ENCODE measurements at regions of chr14 and their contacts with region 1.

Region 1: DNA sequence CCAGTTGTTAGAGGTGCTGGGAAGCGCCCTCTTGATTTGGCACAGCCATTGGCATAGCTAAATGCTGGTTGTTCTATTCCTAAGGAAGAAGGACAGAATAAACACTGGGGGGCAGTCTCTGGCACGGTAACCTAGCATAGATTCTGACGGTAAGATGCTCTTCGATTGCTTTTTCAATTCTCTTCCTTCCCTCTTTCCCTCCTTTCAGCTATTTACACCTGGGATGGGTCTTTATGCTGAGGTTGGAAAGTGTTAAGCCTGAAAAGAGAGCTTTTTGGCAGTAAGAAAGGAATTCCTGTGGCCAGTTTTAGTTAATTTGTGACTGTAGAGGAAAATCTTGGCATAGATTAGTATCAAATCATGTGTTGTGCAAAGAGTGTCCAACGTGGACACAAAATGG is 162.8 kb downstream of the SNAPC1 start:
- DNase-seq: peak; percentile 74
- ATAC-seq: no peak; the same call in 1 of the 2 replicates
- H3K4me3 ChIP-seq: no peak overlapping the region
- H3K27ac ChIP-seq: peak overlapping the region; percentile 96
- H3K4me1 ChIP-seq: peaks cover 58% of the 10 kb centered on the region
- H3K27me3 ChIP-seq: no peaks in the 10 kb centered on the region
- CTCF ChIP-seq: peak; percentile 78

Region 2: GRCh38 chr14:61884711-61885110 is 40.3 kb before region 1 on chr14:
- CTCF ChIA-PET with region 1: interaction called, 8 read pairs
- POLR2A ChIA-PET with region 1: no interaction called
- intact Hi-C with region 1: loop called (anchors 1 kb)
- DNase-seq: peak; percentile 80
- ATAC-seq: peak; percentile 16; the same call in 1 of the 2 replicates
- H3K4me3 ChIP-seq: peak overlapping the region; percentile 45; the same call in 1 of the 2 replicates
- H3K27ac ChIP-seq: peak overlapping the region; percentile 91
- H3K4me1 ChIP-seq: peaks cover 24% of the 10 kb centered on the region
- H3K27me3 ChIP-seq: no peaks in the 10 kb centered on the region
- CTCF ChIP-seq: no peak

Region 3: GRCh38 chr14:61992139-61992538 is 67.1 kb after region 1 on chr14:
- CTCF ChIA-PET with region 1: no interaction called
- POLR2A ChIA-PET with region 1: interaction called, 6 read pairs
- intact Hi-C with region 1: loop called (anchors 1 kb)
- DNase-seq: peak; percentile 97
- ATAC-seq: peak; percentile 97
- H3K4me3 ChIP-seq: peak overlapping the region; percentile 59
- H3K27ac ChIP-seq: peak overlapping the region; percentile 98
- H3K4me1 ChIP-seq: peaks cover 35% of the 10 kb centered on the region
- H3K27me3 ChIP-seq: no peaks in the 10 kb centered on the region
- CTCF ChIP-seq: no peak

Region 4: GRCh38 chr14:62029569-62029924 is 104.5 kb after region 1 on chr14:
- CTCF ChIA-PET with region 1: interaction called, 7 read pairs
- POLR2A ChIA-PET with region 1: interaction called, 7 read pairs
- intact Hi-C with region 1: loop called (anchors 1 kb)
- DNase-seq: no peak
- ATAC-seq: no peak
- H3K4me3 ChIP-seq: no peak overlapping the region
- H3K27ac ChIP-seq: no peak overlapping the region
- H3K4me1 ChIP-seq: peaks cover 38% of the 10 kb centered on the region
- H3K27me3 ChIP-seq: no peaks in the 10 kb centered on the region
- CTCF ChIP-seq: no peak

Region 5: DNA sequence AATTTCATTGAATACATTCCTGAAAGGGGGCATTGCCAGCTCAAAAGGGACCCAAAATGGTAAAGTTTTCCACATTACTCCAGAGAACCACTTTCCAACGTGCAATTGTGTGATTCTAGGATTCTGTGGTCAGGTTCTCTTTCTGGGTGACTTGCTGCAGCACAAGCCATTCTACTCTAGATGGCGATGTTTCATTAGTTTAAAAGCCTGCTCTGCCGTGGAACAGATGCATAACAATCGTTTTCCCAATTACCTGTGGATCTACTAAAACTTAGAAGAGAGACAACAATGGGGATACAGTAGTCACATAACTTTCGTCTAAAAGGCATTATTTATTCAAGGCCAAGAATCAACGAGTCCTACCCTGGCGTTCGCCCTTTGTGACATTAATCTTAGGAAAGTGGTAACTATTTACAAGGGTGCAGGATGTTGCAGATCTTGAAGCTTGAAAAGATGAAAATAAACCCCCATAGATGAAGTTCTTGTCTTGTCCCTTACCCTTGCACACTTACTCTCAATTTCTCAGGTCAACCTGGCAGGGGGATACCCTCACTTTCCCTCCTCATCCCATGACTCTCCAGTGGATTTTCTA is 238.1 kb after region 1 on chr14:
- CTCF ChIA-PET with region 1: interaction called, 4 read pairs
- POLR2A ChIA-PET with region 1: no interaction called
- intact Hi-C with region 1: loop called (anchors 1 kb)
- DNase-seq: peak; percentile 79
- ATAC-seq: peak; percentile 92
- H3K4me3 ChIP-seq: no peak overlapping the region
- H3K27ac ChIP-seq: no peak overlapping the region
- H3K4me1 ChIP-seq: no peaks in the 10 kb centered on the region
- H3K27me3 ChIP-seq: peaks cover 43% of the 10 kb centered on the region
- CTCF ChIP-seq: peak; percentile 95